ENCODE measurements at regions of chr5 and their contacts with region 1.

Region 1: GRCh38 chr5:169435506-169436229 is 134.7 kb upstream of the SLIT3 start:
- DNase-seq: no peak
- ATAC-seq: no peak
- H3K4me3 Mint-ChIP-seq: no peak overlapping the region
- H3K27ac Mint-ChIP-seq: no peak overlapping the region
- H3K4me1 Mint-ChIP-seq: no peaks in the 10 kb centered on the region
- H3K27me3 Mint-ChIP-seq: peaks cover 3% of the 10 kb centered on the region

Region 2: GRCh38 chr5:168513861-168514428 is 921.7 kb before region 1 on chr5:
- CTCF ChIA-PET with region 1: no interaction called
- POLR2A ChIA-PET with region 1: no interaction called
- intact Hi-C with region 1: no loop called
- DNase-seq: no peak
- ATAC-seq: no peak
- H3K4me3 Mint-ChIP-seq: no peak overlapping the region
- H3K27ac Mint-ChIP-seq: no peak overlapping the region
- H3K4me1 Mint-ChIP-seq: no peaks in the 10 kb centered on the region
- H3K27me3 Mint-ChIP-seq: no peaks in the 10 kb centered on the region

Region 3: DNA sequence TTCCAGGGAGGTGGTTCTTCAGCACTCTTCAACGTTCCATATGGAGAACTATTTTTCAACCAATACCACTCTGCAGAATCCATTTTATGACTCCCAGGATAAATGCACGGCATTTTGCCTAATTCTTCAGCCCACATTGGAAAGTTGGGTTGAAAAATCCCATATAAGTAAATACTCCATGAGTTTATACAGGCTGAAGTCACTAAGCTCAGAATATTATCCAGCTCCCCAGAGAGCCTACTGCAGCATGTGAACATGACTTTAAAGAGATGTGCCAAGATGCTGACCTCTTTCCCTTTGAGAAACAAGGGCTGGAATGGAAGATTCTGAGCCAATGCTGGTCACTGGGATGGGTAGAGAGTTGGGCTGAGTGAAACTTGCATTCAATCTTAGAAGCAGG is 22.8 kb before region 1 on chr5:
- CTCF ChIA-PET with region 1: no interaction called
- POLR2A ChIA-PET with region 1: no interaction called
- intact Hi-C with region 1: loop called in 1 of 2 experiments (anchors 1 kb)
- DNase-seq: no peak
- ATAC-seq: no peak
- H3K4me3 Mint-ChIP-seq: no peak overlapping the region
- H3K27ac Mint-ChIP-seq: no peak overlapping the region
- H3K4me1 Mint-ChIP-seq: no peaks in the 10 kb centered on the region
- H3K27me3 Mint-ChIP-seq: peaks cover 5% of the 10 kb centered on the region

Measured in activated CD4-positive, alpha-beta T cell treated with anti-CD3 and anti-CD28 coated beads for 36 hours (primary cell).